Panc1 (cell line): ENCODE measurements at regions of chr20 and their contacts with region 1.

Region 1: GRCh38 chr20:29119141-29119540 is 2138.3 kb upstream of the DEFB115 start:
- DNase-seq: no peak
- ATAC-seq: no peak
- H3K4me3 ChIP-seq: no peak overlapping the region
- H3K27ac ChIP-seq: no peak overlapping the region
- H3K4me1 ChIP-seq: no peaks in the 10 kb centered on the region
- H3K27me3 ChIP-seq: no peaks in the 10 kb centered on the region
- CTCF ChIP-seq: no peak

Region 2: GRCh38 chr20:29306390-29307072 is 187.4 kb after region 1 on chr20:
- CTCF ChIA-PET with region 1: no interaction called
- POLR2A ChIA-PET with region 1: no interaction called
- in situ Hi-C with region 1: no loop called
- intact Hi-C with region 1: no loop called
- DNase-seq: no peak
- ATAC-seq: no peak
- H3K4me3 ChIP-seq: no peak overlapping the region
- H3K27ac ChIP-seq: no peak overlapping the region
- H3K4me1 ChIP-seq: no peaks in the 10 kb centered on the region
- H3K27me3 ChIP-seq: no peaks in the 10 kb centered on the region
- CTCF ChIP-seq: no peak

Region 3: DNA sequence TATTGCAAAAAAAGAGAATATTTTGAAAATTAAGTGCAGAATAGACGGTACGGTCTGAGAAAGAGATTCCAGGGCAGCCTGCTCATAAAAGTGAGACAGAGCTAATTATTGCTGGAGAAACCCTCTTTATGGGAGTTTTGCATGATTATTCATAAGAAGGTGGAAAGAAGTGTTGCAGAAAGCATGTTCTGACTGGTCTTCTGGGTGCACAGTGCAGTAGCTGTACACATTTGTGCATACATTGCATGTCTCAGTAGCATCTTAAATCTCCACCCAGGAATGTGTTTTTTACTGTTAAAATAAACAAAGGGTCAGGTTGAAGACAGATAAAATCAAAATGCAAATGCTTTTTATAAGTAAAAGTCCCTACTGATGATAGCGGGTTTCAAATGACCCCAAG is 324.7 kb after region 1 on chr20:
- CTCF ChIA-PET with region 1: no interaction called
- POLR2A ChIA-PET with region 1: no interaction called
- in situ Hi-C with region 1: no loop called
- intact Hi-C with region 1: no loop called
- DNase-seq: no peak
- ATAC-seq: no peak
- H3K4me3 ChIP-seq: no peak overlapping the region; a peak in 1 of 4 replicates
- H3K27ac ChIP-seq: no peak overlapping the region
- H3K4me1 ChIP-seq: peaks cover 6% of the 10 kb centered on the region; the same call in 1 of the 2 replicates
- H3K27me3 ChIP-seq: 0 out of 2 replicates have a peak, but pooled peaks cover 2% of the 10 kb centered on the region
- CTCF ChIP-seq: no peak

Region 4: DNA sequence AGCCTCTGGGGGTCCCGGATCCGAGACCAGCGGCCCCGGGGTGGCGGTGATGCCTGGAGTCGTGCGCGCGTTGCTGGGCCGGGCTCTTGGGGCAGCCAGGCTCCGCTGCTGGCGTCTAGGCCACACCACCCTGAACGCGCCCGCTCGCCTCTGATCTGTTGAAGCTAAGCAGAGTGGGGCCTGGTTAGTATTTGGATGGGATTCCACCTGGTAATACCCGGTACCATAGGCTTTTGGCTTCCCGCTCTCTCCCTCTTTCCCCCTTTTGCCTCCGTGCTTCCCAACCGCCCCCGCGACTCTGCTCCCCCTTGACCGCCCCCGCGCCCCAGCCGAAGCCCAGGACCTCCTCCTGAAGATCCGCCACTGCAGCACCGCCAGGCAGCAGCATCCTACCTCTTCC is 754.8 kb after region 1 on chr20:
- CTCF ChIA-PET with region 1: no interaction called
- POLR2A ChIA-PET with region 1: no interaction called
- in situ Hi-C with region 1: no loop called
- intact Hi-C with region 1: loop called (anchors 10 kb)
- DNase-seq: no peak
- ATAC-seq: no peak
- H3K4me3 ChIP-seq: peak overlapping the region in 1 of 2 experiments; percentile 18; a peak in 1 of 4 replicates
- H3K27ac ChIP-seq: no peak overlapping the region
- H3K4me1 ChIP-seq: no peaks in the 10 kb centered on the region
- H3K27me3 ChIP-seq: no peaks in the 10 kb centered on the region
- CTCF ChIP-seq: no peak